CD4-positive, alpha-beta T cell (primary cell): ENCODE measurements at regions of chr3 and their contacts with region 1.

Region 1: GRCh38 chr3:71069797-71070196 is 513.7 kb downstream of the FOXP1 start:
- DNase-seq: peak; percentile 52 to 84 (median 70)
- ATAC-seq: peak; percentile 24
- H3K4me3 ChIP-seq: no peak overlapping the region
- H3K4me3 Mint-ChIP-seq: peak overlapping the region; percentile 57
- H3K27ac ChIP-seq: peak overlapping the region in 1 of 2 donors; percentile 18
- H3K27ac Mint-ChIP-seq: peak overlapping the region; percentile 86
- H3K4me1 ChIP-seq: peaks cover 57% of the 10 kb centered on the region
- H3K4me1 Mint-ChIP-seq: peaks cover 78% of the 10 kb centered on the region
- H3K27me3 ChIP-seq: no peaks in the 10 kb centered on the region
- H3K27me3 Mint-ChIP-seq: no peaks in the 10 kb centered on the region
- CTCF ChIP-seq: peak; percentile 74

Region 2: GRCh38 chr3:70550723-70551319 is 519.0 kb before region 1 on chr3:
- CTCF ChIA-PET with region 1: no interaction called
- POLR2A ChIA-PET with region 1: no interaction called
- intact Hi-C with region 1: loop called (anchors 2 to 10 kb)
- DNase-seq: peak; percentile 59 to 83 (median 65)
- ATAC-seq: peak; percentile 84
- H3K4me3 ChIP-seq: no peak overlapping the region
- H3K4me3 Mint-ChIP-seq: no peak overlapping the region
- H3K27ac ChIP-seq: no peak overlapping the region
- H3K27ac Mint-ChIP-seq: no peak overlapping the region
- H3K4me1 ChIP-seq: no peaks in the 10 kb centered on the region
- H3K4me1 Mint-ChIP-seq: no peaks in the 10 kb centered on the region
- H3K27me3 ChIP-seq: no peaks in the 10 kb centered on the region
- H3K27me3 Mint-ChIP-seq: peaks cover 12% of the 10 kb centered on the region
- CTCF ChIP-seq: peak; percentile 75

Region 3: GRCh38 chr3:71006810-71007785 is 62.7 kb before region 1 on chr3:
- CTCF ChIA-PET with region 1: interaction called, 6 read pairs
- POLR2A ChIA-PET with region 1: interaction called, 3 read pairs
- intact Hi-C with region 1: loop called (anchors 1 to 2 kb)
- DNase-seq: peak in 3 of 14 experiments; percentile 61 to 66 (median 63)
- ATAC-seq: no peak
- H3K4me3 ChIP-seq: no peak overlapping the region
- H3K4me3 Mint-ChIP-seq: peak overlapping the region; percentile 22
- H3K27ac ChIP-seq: no peak overlapping the region
- H3K27ac Mint-ChIP-seq: peak overlapping the region; percentile 96
- H3K4me1 ChIP-seq: peaks cover 38% of the 10 kb centered on the region
- H3K4me1 Mint-ChIP-seq: peaks cover 83% of the 10 kb centered on the region
- H3K27me3 ChIP-seq: no peaks in the 10 kb centered on the region
- H3K27me3 Mint-ChIP-seq: no peaks in the 10 kb centered on the region
- CTCF ChIP-seq: peak; percentile 76

Region 4: GRCh38 chr3:71087143-71088018 is 17.6 kb after region 1 on chr3:
- CTCF ChIA-PET with region 1: interaction called, 4 read pairs
- POLR2A ChIA-PET with region 1: interaction called, 19 read pairs
- intact Hi-C with region 1: no loop called
- DNase-seq: peak in 10 of 14 experiments; percentile 14 to 86 (median 47)
- ATAC-seq: peak; percentile 77
- H3K4me3 ChIP-seq: peak overlapping the region; percentile 11
- H3K4me3 Mint-ChIP-seq: peak overlapping the region; percentile 69
- H3K27ac ChIP-seq: peak overlapping the region; percentile 57 to 71
- H3K27ac Mint-ChIP-seq: peak overlapping the region; percentile 86
- H3K4me1 ChIP-seq: peaks cover 81% of the 10 kb centered on the region
- H3K4me1 Mint-ChIP-seq: peaks cover 86% of the 10 kb centered on the region
- H3K27me3 ChIP-seq: no peaks in the 10 kb centered on the region
- H3K27me3 Mint-ChIP-seq: no peaks in the 10 kb centered on the region
- CTCF ChIP-seq: no peak